CD4-positive, alpha-beta T cell (primary cell): ENCODE measurements at regions of chr12 and their contacts with region 1.

Region 1: GRCh38 chr12:24728366-24728765 is 220.5 kb downstream of the BCAT1 start:
- DNase-seq: peak in 1 of 14 experiments; percentile 7
- ATAC-seq: no peak
- H3K4me3 ChIP-seq: no peak overlapping the region
- H3K4me3 Mint-ChIP-seq: no peak overlapping the region
- H3K27ac ChIP-seq: no peak overlapping the region
- H3K27ac Mint-ChIP-seq: no peak overlapping the region
- H3K4me1 ChIP-seq: no peaks in the 10 kb centered on the region
- H3K4me1 Mint-ChIP-seq: no peaks in the 10 kb centered on the region
- H3K27me3 ChIP-seq: no peaks in the 10 kb centered on the region
- H3K27me3 Mint-ChIP-seq: no peaks in the 10 kb centered on the region
- CTCF ChIP-seq: no peak

Region 2: GRCh38 chr12:23659131-23659530 is 1069.2 kb before region 1 on chr12:
- CTCF ChIA-PET with region 1: no interaction called
- POLR2A ChIA-PET with region 1: no interaction called
- intact Hi-C with region 1: loop called in 1 of 2 experiments (anchors 5 kb)
- DNase-seq: no peak
- ATAC-seq: no peak
- H3K4me3 ChIP-seq: no peak overlapping the region
- H3K4me3 Mint-ChIP-seq: no peak overlapping the region
- H3K27ac ChIP-seq: no peak overlapping the region
- H3K27ac Mint-ChIP-seq: no peak overlapping the region
- H3K4me1 ChIP-seq: no peaks in the 10 kb centered on the region
- H3K4me1 Mint-ChIP-seq: no peaks in the 10 kb centered on the region
- H3K27me3 ChIP-seq: no peaks in the 10 kb centered on the region
- H3K27me3 Mint-ChIP-seq: no peaks in the 10 kb centered on the region
- CTCF ChIP-seq: no peak